A673 (cell line): ENCODE measurements at regions of chr3 and their contacts with region 1.

Region 1: GRCh38 chr3:25904206-25904605 is 114.3 kb downstream of the OXSM start:
- DNase-seq: peak; percentile 71
- H3K4me3 ChIP-seq: no peak overlapping the region
- H3K27ac ChIP-seq: peak overlapping the region; percentile 40
- H3K4me1 ChIP-seq: peaks cover 8% of the 10 kb centered on the region
- H3K27me3 ChIP-seq: no peaks in the 10 kb centered on the region
- CTCF ChIP-seq: peak; percentile 52

Region 2: DNA sequence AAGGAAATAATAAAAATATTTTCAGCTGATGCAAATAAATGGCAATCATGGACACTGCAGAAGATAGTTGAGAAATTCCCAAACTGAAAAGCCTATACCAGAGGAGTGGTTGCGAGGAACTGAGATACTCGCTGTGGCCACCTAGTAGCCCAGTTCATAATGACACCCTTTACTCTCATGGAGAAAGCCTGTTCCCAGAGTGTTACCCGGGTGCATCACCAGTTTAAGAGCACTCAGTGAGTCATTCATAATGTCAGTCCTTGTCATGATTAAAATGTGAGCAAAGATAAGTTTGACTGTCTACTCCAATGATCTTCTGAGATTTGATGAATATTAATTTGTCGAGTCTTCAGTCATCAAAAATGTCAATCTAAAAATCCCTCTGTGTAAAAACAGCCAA is 579.9 kb after region 1 on chr3:
- CTCF ChIA-PET with region 1: no interaction called
- POLR2A ChIA-PET with region 1: no interaction called
- intact Hi-C with region 1: loop called (anchors 1 kb)
- DNase-seq: peak; percentile 43
- H3K4me3 ChIP-seq: no peak overlapping the region
- H3K27ac ChIP-seq: no peak overlapping the region
- H3K4me1 ChIP-seq: no peaks in the 10 kb centered on the region
- H3K27me3 ChIP-seq: no peaks in the 10 kb centered on the region
- CTCF ChIP-seq: peak; percentile 38; the same call in 1 of the 2 replicates

Region 3: DNA sequence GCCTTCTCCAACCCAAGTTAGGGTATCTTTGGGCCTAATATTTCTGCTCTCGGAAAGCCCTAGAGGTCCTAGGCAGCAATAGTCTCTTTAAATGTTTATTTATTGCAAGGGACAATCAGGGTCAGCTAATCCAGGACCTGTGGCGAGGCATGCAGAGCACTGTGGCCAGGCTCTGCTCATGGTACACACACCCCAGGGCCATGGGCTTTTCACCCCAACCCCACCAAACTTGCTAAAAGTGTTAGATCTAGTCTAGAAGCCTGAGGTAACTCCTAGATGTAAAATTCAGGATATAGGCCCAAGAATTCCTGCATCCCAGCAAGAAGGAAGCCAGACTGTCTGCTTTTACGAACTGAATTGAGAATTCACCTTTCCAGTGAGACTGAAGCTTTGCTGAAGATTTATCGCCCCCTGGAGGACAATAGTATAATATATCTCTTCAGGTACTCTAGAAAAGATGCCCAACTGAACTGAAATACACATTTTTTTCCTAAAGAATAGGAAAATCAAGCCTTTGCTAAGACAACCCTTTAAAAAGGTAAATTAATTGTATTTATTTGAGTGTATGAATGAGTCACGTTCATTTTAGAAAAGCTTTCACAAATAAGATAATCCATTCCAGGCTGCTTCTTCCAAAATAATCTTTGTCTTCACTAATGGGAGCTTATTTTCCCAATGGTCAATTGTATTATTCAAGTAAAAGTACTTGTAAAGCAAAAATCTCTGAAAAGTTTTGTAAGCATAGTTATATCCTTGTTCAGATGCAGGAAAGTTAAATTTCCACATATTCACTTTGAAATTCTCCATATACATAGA is 808.2 kb after region 1 on chr3:
- CTCF ChIA-PET with region 1: interaction called, 6 read pairs
- POLR2A ChIA-PET with region 1: no interaction called
- intact Hi-C with region 1: loop called (anchors 5 kb)
- DNase-seq: peak; percentile 70
- H3K4me3 ChIP-seq: no peak overlapping the region
- H3K27ac ChIP-seq: no peak overlapping the region
- H3K4me1 ChIP-seq: no peaks in the 10 kb centered on the region
- H3K27me3 ChIP-seq: no peaks in the 10 kb centered on the region
- CTCF ChIP-seq: peak; percentile 69